Activated CD4-positive, alpha-beta T cell treated with anti-CD3 and anti-CD28 coated beads, Interleukin-2, amount 10 ng/mL, durations not matched to agents 24 days and 14 days (primary cell): ENCODE measurements at regions of chr1 and their contacts with region 1.

Region 1: DNA sequence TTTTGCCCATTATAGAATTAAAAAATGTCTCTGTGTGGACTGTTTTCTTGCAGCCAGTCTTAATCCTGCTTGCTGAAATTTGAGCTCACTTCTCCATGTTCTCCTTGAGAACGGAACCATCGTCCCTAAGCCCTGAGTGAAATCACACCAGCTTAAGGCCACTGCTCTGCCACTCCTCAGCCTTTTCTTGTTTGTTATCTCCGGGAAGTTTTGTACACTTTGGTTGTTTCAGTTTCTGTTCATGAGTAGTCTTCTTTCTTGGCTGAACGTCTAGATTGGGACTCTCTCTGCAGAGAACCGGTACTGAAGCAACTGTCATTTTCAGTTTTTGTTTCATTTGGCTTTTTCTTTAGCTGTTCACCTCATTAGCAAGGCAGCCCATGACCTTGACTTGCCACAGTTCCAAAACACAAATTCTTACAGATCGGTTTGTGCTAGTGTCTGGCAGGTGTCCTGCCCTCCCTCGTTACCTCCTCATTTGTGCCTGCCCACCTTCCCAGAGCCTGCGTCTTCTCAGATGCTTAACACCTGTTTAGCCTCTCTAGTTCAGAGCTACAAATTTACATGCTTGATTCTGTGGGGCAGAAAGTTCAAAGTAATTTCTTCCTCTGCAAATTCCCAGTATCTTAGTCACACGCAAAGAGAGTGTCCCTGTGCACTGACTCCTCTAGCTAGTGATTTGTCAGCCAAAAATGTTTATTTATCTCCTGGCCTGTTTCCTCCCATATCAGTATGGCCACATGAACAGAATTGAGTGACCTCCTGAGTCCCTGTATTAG is 12.4 kb downstream of the PSEN2 start:
- DNase-seq: peak; percentile 84
- H3K4me3 Mint-ChIP-seq: peak overlapping the region; percentile 72
- H3K27ac Mint-ChIP-seq: peak overlapping the region; percentile 95
- H3K4me1 Mint-ChIP-seq: peaks cover 53% of the 10 kb centered on the region
- H3K27me3 Mint-ChIP-seq: no peaks in the 10 kb centered on the region

Region 2: DNA sequence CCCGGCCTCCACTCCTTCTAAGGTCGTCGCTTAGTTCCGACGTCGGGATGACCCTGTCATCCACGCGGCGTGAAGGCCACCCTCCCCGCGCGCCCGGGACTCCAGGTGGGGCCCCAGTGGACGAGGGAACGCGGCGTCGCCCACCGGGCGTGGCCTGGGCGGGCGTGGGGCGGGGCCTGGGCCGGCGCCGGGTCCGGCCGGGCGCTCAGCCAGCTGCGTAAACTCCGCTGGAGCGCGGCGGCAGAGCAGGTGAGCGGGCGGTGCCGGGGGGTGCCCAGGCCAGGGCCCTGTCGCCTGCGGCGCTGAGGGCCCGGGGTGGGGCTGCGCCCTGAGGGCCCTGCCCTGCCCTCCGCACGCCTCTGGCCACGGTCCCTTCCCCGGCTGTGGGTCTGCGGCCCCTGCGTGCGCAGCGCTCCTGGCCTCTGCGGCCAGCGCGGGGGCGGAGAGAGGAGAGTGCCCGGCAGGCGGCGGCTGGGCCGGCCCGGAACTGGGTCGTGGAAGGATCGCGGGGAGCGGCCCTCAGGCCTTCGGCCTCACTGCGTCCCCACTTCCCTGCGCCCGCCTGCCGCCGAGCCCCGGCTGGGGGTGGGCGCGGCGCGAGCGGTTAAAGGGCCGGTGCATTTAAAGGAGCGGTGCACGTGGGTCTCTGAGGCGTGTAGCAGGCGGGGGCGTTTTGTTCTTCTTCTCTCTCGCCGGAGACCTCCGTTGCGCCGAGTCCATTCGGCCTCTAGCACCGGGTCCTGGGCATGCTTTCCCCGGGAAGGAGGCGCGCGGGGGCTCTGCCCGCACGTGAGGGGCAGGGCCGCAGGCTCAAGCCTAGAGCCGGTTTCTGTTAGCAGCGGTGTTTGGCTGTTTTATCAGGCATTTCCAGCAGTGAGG is 12.2 kb before region 1 on chr1 and contains the start of gene PSEN2:
- intact Hi-C with region 1: loop called (anchors 1 kb)
- DNase-seq: peak; percentile 93
- H3K4me3 Mint-ChIP-seq: peak within 1 kb of the TSS; percentile 84
- H3K27ac Mint-ChIP-seq: peak within 1 kb of the TSS; percentile 78
- H3K4me1 Mint-ChIP-seq: peaks cover 16% of the 10 kb centered on the region
- H3K27me3 Mint-ChIP-seq: peaks cover 24% of the 10 kb centered on the region
- total RNA-seq, gene PSEN2: 10.4 and 10.7 TPM in 2 replicates

Region 3: DNA sequence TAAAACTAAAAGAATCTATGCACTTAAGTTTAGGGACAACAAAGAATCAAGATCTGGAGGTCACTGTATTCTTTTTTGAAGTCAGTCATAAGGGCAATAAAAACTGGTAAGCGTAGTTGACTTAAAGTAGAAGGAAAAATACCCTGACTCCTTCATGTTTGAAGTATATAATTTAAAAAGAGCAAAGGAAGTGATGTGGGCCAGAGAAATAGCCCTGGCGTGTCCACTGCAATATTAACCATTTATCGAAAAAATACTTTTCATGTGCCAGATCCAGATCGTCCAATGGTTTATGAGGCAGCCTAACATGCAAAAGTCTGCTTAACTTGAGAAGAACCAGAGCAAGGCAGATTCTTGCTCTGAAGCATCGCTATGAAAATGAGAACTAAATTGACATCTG is 219.2 kb after region 1 on chr1:
- intact Hi-C with region 1: no loop called
- DNase-seq: no peak
- H3K4me3 Mint-ChIP-seq: no peak overlapping the region
- H3K27ac Mint-ChIP-seq: no peak overlapping the region
- H3K4me1 Mint-ChIP-seq: no peaks in the 10 kb centered on the region
- H3K27me3 Mint-ChIP-seq: peaks cover 19% of the 10 kb centered on the region